ENCODE measurements at regions of chr15 and their contacts with region 1.

Region 1: DNA sequence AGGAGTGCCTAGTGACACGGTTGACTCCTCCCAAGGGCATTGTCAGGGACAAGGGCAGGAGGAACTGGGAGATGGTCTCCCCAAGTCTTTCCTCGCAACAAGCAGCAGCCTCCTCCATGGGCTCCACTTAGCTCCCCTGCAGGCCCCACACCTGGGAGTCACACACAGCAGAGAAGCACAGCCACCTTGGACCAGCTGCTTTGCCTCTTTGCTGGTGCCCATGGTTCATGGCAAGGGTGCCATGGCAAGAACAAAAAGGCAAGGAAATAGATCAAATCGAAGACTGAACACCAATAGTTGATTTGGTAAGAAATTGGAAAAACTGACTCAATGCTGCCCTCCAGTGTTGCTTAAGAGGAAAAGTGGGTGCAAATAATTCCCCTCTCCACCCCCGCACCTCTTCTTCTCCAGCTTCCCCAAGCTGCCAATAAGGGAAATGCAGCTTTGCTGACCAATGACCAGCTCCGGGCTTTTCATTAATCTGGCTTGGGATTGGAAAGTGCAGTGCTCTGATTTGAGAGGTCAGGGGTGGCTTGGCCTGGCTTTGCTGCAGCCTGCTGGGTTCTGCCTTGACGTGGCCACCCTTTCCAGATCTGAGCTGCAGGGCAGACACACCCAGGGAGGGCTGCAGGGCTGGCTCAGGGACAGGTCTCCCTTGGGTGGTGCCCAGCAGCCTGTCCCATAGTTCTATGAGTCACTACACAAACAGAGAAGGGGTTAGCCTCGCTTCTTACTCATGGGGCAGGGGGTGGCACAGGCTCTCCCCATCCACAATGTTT is 162.0 kb downstream of the KLF13 start:
- DNase-seq: peak in 8 of 10 donors; percentile 17 to 71 (median 44)
- ATAC-seq: peak; percentile 28 to 43
- H3K4me3 Mint-ChIP-seq: peak overlapping the region in 1 of 10 donors; percentile 35
- H3K27ac Mint-ChIP-seq: peak overlapping the region; percentile 32 to 82 (median 66)
- H3K4me1 Mint-ChIP-seq: peaks cover 16 to 48% (median 35%) of the 10 kb centered on the region in 4 donors
- H3K27me3 Mint-ChIP-seq: peaks cover 0 to 5% (median 0%) of the 10 kb centered on the region in 5 donors

Region 2: DNA sequence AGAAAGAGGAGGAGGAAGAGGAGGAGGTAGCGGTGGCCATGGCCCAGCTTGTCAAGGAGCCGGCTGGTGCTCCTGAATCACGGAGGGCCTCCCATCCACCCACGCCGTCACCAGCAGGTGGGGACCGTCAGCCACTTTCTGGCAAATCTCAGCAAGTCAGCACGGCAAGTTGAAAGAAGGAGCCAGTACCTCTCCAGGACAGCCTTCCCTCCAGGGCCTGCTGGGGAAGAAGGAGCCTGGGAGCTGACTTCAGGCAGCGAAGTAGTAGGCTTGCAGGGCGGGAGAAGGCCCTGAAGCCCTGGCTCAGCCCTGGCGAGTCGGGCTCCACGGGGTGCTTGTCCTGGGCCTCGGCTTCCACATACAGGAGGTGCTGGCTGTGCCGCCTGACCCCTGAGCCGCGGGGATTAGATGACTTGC is 287.9 kb before region 1 on chr15:
- POLR2A ChIA-PET with region 1: interaction called, 17 read pairs
- DNase-seq: peak; percentile 53 to 88 (median 66)
- ATAC-seq: peak; percentile 78 to 84
- H3K4me3 Mint-ChIP-seq: no peak overlapping the region
- H3K27ac Mint-ChIP-seq: peak overlapping the region in 5 of 10 donors; percentile 14 to 80 (median 32)
- H3K4me1 Mint-ChIP-seq: peaks cover 8 to 32% (median 26%) of the 10 kb centered on the region in 4 donors
- H3K27me3 Mint-ChIP-seq: peaks cover 0 to 2% (median 0%) of the 10 kb centered on the region in 5 donors

Region 3: DNA sequence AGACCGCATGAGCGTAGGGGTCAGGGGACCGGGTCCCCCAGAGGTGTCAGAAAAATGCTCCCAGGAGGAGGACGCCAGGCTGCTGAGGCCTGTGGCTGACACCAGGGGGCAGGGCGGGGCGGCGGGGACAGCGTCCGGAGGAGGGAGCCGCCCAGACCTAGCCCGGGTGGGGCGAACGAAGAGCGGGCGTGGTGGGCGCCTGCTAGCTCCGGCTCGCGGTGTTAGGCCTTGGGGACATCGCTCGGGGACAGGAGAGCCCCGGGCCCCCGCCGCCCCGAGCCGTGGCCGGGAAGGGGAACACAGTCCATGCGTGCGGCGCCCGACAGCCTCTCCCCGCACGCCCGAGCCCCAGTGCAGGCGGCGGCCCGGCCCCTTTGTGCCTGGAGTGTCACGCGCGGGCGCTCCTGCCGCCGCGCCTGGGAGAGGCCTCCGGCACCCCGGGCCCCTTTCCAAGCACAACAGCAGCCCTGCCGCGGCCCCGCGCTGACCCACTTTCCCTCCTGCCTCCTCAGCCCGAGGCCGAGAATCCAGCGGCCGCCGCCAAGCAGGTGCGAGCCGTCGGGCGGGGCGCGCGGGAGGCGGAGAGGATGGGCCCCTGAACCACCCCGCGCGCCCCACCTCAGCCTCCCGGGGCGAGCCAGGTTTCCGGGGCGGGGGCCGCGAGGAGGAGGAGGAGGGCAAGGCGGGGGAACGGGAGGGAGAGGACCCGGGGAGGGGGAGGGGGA is 273.0 kb before region 1 on chr15:
- POLR2A ChIA-PET with region 1: interaction called, 18 read pairs
- DNase-seq: peak; percentile 52 to 84 (median 73)
- ATAC-seq: peak; percentile 72 to 78
- H3K4me3 Mint-ChIP-seq: peak overlapping the region; percentile 48 to 88 (median 68)
- H3K27ac Mint-ChIP-seq: peak overlapping the region in 9 of 10 donors; percentile 4 to 92 (median 85)
- H3K4me1 Mint-ChIP-seq: peaks cover 16 to 45% (median 35%) of the 10 kb centered on the region in 4 donors
- H3K27me3 Mint-ChIP-seq: no peaks in the 10 kb centered on the region

Region 4: DNA sequence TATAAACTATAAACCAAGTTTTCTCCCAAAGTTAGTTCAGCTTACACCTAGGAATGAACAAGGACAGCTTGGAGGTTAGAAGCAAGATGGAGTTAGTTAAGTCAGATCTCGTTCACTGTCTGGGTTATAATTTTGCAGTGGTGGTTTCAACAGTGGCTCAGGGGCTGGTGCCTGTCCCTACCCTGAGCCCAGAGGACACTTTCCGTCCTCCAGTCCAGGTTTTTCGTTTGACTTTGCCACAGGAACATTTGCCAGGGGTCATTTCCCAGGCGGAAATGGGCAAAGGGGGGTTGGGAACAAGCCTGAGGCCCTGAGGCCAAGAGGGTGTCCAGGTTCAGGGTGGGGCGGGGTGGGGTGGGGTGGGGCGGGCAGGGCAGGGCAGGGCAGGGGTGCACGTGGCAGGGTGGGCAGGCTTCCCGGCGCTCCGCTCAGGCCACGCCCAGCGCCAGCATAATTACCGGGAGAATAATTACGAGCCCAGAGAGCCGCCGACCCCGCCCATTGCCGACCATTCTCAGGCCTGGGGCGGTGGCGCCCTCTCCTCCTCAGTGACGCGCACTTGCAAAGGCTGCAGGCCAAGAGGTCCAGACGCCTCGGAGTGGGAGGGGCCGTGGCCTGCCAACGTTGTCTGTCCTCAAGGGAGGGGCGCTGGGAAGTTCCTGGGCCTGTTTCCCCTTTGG is 91.6 kb before region 1 on chr15:
- POLR2A ChIA-PET with region 1: interaction called, 14 read pairs
- DNase-seq: no peak
- ATAC-seq: no peak
- H3K4me3 Mint-ChIP-seq: peak overlapping the region in 1 of 10 donors; percentile 54
- H3K27ac Mint-ChIP-seq: peak overlapping the region in 3 of 10 donors; percentile 72 to 75 (median 73)
- H3K4me1 Mint-ChIP-seq: peaks cover 21 to 61% (median 58%) of the 10 kb centered on the region in 4 donors
- H3K27me3 Mint-ChIP-seq: no peaks in the 10 kb centered on the region

Region 5: DNA sequence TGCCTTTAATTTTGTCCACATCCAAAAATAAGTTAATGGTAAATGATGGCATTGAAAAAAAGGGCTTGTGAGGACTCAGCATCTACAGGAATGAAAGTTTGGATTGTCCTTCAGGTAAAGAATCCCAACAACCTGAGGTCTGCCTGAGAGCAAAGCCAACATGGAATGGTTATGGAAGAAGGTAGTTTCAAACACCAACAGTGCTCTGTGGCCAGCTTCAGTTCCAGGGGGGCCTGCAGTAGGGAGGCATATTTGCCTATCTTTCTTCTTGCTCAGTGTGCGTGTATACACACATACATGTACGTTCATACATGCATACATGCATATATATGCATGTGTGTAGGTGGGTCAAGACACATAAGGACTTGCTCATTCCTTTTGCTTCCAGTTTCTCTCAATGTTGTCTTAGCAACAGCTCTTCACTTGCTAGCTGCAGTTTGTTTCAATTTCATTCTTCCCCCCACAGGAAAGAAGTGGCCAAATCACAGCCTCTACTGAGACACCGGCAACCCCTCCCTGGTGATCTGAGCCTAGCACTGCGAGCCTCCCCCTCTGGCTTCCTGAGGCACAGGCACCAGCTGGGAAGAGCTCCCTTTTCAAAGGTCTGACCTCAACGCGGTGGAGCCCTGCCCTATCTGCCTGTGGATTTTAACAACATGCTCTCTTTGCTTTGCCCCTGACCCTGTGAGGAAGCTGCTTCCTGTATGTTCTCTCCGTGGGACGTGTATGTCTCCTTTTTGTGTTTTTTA is 15.8 kb before region 1 on chr15:
- POLR2A ChIA-PET with region 1: interaction called, 67 read pairs
- DNase-seq: peak in 9 of 10 donors; percentile 27 to 75 (median 57)
- ATAC-seq: peak; percentile 84 to 87
- H3K4me3 Mint-ChIP-seq: peak overlapping the region; percentile 66 to 88 (median 81)
- H3K27ac Mint-ChIP-seq: peak overlapping the region; percentile 84 to 97 (median 95)
- H3K4me1 Mint-ChIP-seq: peaks cover 30 to 79% (median 63%) of the 10 kb centered on the region in 4 donors
- H3K27me3 Mint-ChIP-seq: no peaks in the 10 kb centered on the region

Measured in naive thymus-derived CD8-positive, alpha-beta T cell (primary cell).